ENCODE measurements at regions of chr1 and their contacts with region 1.

Region 1: DNA sequence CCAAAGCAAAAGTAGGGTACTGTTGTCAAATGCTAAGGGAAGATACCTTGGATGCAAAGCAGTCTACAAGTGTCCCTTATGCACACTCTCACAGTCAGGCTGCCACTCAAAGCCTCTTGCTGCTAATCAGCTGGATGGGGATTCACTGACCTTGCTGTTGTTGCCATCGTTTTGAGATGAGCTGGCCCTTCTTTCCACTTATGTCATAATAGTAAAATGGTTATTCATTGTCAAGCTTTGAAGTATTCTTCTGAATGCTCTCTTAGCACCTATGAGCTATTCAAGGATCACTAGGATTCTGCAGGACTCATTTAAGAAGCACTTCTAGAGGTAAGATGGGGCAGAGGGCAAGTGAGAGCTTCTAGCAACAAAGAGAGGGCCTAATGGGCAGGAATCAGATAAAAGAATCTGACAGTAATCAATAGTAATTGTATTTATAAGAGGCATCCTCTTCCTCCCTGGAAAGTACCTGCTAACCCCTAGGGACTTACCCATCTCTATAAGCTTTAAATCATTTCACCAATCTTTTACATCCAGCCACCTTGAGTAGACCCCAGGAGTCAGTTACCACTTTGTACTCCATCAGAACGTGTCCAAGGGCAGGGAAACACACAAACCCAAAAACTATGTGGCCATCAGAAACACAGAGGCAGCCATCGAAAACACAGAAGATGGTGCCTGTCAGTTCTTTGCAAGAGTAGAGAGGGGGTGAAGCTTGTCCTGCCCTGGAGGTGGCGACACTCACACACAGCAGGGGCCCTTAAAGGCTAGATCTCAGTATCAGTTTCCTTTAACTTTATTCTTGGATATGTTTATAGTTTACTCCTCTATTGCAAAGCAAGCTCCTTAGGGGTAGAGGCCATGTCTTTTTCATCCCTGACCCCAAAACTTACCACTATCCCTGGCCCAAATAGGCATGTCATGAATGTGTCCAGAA is 103.7 kb upstream of the NFIA start:
- H3K4me3 ChIP-seq: no peak overlapping the region
- H3K27ac ChIP-seq: no peak overlapping the region
- H3K4me1 ChIP-seq: peaks cover 4% of the 10 kb centered on the region; the same call in 1 of the 2 replicates
- CTCF ChIP-seq: peak; percentile 65

Region 2: GRCh38 chr1:60989749-60990713 is 11.3 kb after region 1 on chr1:
- CTCF ChIA-PET with region 1: interaction called, 10 read pairs
- POLR2A ChIA-PET with region 1: no interaction called
- H3K4me3 ChIP-seq: no peak overlapping the region
- H3K27ac ChIP-seq: peak overlapping the region; percentile 40
- H3K4me1 ChIP-seq: peaks cover 16% of the 10 kb centered on the region
- CTCF ChIP-seq: no peak

Region 3: DNA sequence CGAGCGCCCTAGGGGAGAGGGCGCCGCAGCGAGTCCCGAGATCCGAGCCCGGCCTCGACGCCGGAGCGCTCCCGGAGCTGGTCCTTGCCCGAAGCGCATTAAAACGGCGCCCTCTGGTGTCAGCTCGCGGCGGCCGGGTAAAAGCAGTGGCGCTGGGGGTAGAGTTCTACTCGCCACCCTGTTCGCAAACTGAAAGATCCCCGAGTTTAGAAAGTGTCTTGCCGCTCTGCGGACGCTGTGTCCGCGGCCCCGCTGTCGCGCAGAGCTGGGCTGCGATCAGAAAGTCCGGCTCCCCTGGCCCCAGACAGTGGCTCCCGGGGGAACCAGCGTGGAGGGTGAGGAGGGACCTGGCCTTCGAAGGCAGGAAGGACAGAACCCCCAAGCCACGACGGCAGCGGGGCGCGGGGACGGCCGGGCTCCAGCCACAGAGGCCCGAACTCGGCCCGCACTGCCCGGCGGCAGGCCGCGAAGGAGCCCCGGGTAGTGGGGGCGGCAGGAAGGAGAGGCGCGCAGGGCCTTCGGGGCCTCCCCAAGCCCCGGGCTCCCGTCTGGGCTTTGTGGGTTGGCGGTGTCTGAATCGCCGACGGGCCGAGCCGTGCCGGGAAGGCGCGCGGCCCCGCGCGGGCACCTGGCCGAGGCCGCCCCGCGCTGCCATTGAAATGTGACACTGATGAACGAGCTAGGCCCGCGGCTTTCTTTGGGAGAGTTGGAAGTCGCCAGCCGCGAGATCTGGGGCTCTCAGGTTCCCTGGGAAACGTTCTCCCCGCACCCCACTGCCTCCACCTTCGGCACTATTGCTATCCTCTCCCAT is 64.5 kb after region 1 on chr1:
- CTCF ChIA-PET with region 1: interaction called, 44 read pairs
- POLR2A ChIA-PET with region 1: no interaction called
- H3K4me3 ChIP-seq: peak overlapping the region; percentile 30
- H3K27ac ChIP-seq: no peak overlapping the region; the same call in 1 of the 2 replicates
- H3K4me1 ChIP-seq: no peaks in the 10 kb centered on the region; the same call in 1 of the 2 replicates
- CTCF ChIP-seq: peak; percentile 84

Region 4: DNA sequence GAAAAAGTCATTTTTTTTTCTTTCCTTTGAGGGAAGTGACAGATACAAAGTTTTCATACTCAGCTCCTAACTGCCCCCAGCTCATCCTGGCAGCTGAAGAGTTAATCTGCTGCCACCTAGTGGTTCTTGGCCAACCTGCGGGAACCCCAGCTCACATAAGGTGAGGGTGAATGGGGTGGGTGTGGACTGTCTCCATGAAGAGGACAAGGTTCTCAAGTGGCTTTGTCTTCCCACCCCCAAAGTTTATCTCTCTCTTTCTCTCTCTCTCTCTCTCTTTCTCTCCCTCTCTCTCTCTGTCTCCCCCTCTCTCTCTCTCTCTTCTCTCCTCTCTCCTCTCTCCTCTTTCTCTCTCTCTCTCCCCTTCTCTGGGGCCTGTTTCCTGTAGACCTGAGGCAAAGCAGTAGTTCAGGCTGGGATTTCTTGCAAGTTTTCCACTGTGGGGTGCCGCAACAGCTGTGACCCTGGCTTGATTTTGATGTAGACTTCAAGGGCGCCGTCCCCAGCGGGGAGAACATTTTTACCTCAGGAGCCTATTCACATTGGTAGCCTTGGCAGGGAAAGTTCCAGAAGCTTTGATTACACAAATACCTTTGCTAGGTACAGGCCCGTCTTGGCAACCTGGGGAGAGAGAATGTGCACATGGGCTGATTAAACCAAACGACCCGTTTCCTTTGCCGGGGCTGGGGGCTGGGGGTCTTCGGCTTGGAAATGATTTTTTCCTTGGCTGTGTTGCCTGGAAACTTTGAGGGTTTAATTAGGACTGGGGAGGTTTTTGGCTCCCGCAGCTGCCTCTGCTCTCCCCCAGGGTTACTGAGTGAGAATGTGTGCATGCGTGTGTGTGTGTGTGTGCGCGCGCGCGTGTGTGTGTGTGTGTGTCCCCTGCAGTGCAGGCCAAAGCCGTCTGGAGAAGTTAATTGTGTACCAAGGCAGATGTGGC is 610.3 kb after region 1 on chr1:
- CTCF ChIA-PET with region 1: interaction called, 14 read pairs
- POLR2A ChIA-PET with region 1: no interaction called
- H3K4me3 ChIP-seq: no peak overlapping the region
- H3K27ac ChIP-seq: no peak overlapping the region
- H3K4me1 ChIP-seq: no peaks in the 10 kb centered on the region
- CTCF ChIP-seq: peak; percentile 82

Region 5: DNA sequence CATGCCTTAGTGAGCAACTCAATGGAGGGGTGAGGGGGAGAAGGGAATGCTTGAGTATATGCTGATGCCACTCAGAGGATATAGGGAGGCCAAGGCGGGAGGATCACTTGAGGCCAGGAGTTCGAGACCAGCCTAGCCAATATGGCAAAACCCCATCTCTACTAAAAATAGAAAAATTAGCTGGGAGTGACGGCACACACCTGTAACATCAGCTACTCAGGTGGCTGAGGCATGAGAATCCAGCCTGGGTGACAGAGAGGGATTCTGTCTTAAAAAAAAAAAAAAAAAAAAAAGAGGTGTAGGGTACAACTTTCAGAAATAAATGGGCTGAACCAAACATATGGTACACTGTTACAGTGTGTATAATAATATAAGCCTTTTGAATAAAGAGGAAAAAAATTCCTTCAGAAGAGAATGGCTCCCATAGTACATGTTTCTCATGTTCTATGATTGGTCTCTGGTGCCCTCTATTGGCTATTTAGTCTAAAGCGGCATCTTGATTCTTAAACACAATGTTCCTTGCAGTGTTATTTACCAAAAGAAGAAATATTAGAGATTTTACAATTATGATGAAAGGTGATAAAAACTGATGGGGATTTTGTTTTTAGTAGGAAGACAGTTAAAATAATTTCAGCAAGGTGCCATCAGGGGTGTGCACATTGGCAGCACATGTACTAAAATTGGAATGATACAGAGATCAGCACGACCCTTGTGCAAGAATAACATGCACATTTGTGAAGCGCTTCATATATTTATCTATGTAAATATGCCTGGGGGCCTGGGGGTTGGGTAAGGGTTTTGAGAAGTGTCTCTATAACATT is 873.4 kb after region 1 on chr1:
- CTCF ChIA-PET with region 1: interaction called, 10 read pairs
- POLR2A ChIA-PET with region 1: no interaction called
- H3K4me3 ChIP-seq: no peak overlapping the region
- H3K27ac ChIP-seq: no peak overlapping the region
- H3K4me1 ChIP-seq: 0 out of 2 replicates have a peak, but pooled peaks cover 3% of the 10 kb centered on the region
- CTCF ChIP-seq: peak; percentile 29; the same call in 1 of the 2 replicates